Mammary epithelial cell (primary cell): ENCODE measurements at regions of chr14 and their contacts with region 1.

Region 1: GRCh38 chr14:81269100-81269978 is 48.6 kb upstream of the GTF2A1 start:
- DNase-seq: peak; percentile 64
- H3K4me3 ChIP-seq: no peak overlapping the region
- H3K27ac ChIP-seq: no peak overlapping the region
- H3K4me1 ChIP-seq: peaks cover 22% of the 10 kb centered on the region
- H3K27me3 ChIP-seq: no peaks in the 10 kb centered on the region
- CTCF ChIP-seq: peak; percentile 71 to 87

Region 2: GRCh38 chr14:80996049-80996901 is 273.1 kb before region 1 on chr14:
- CTCF ChIA-PET with region 1: no interaction called
- dilution Hi-C with region 1: no loop called
- in situ Hi-C with region 1: no loop called
- intact Hi-C with region 1: loop called (anchors 5 kb)
- DNase-seq: peak; percentile 81
- H3K4me3 ChIP-seq: no peak overlapping the region
- H3K27ac ChIP-seq: no peak overlapping the region
- H3K4me1 ChIP-seq: no peaks in the 10 kb centered on the region
- H3K27me3 ChIP-seq: peaks cover 5% of the 10 kb centered on the region
- CTCF ChIP-seq: peak; percentile 67 to 83

Region 3: GRCh38 chr14:81178063-81178462 is 91.3 kb before region 1 on chr14:
- CTCF ChIA-PET with region 1: no interaction called
- dilution Hi-C with region 1: no loop called
- in situ Hi-C with region 1: no loop called
- intact Hi-C with region 1: no loop called
- DNase-seq: no peak
- H3K4me3 ChIP-seq: no peak overlapping the region
- H3K27ac ChIP-seq: no peak overlapping the region
- H3K4me1 ChIP-seq: no peaks in the 10 kb centered on the region
- H3K27me3 ChIP-seq: no peaks in the 10 kb centered on the region
- CTCF ChIP-seq: no peak

Region 4: DNA sequence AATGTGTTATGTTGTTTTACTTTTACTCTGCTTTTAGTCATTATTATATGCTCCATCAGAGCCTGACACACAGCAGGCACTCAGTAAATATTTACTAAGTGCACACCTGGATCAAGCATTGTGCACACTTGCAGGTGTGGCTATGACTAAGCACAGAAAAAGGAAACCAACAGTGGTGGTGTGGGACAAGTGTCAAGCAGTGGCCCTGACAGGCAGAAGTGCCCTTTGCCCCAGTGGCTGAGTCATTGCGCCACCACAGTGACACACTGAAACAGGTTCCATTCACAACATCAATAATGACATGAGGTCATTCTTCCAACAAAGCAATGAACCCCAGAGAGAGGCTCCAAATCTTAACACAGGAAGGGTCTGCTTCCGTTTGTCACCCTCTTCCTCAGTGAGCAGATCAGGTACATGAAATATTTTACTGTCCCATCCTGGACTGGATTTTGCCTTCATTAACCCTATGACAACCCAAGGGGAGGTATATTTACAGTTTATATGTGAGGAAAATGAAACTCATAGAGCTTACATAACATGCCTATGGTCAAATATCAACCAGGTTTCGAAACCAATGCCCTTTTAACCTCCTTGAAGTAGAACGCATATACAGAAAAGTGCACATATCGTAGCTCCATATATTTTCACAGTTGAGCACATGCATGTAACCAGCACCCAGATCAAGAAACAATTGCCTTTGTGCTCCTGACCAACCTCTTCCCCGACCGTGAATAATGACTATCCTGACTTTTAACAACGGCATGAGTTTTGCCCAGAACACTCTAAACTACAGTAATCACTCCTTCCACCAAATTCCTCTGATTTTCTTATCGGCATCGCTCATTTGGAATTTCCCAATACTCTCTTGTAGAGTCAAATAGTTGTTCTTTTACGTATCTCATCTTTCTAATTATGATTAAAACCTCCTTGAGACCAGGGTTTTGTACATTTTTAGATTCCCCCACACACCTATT is 34.2 kb after region 1 on chr14:
- CTCF ChIA-PET with region 1: no interaction called
- dilution Hi-C with region 1: no loop called
- in situ Hi-C with region 1: no loop called
- intact Hi-C with region 1: no loop called
- DNase-seq: peak; percentile 77
- H3K4me3 ChIP-seq: no peak overlapping the region
- H3K27ac ChIP-seq: peak overlapping the region; percentile 17
- H3K4me1 ChIP-seq: peaks cover 28% of the 10 kb centered on the region
- H3K27me3 ChIP-seq: no peaks in the 10 kb centered on the region
- CTCF ChIP-seq: no peak

Region 5: DNA sequence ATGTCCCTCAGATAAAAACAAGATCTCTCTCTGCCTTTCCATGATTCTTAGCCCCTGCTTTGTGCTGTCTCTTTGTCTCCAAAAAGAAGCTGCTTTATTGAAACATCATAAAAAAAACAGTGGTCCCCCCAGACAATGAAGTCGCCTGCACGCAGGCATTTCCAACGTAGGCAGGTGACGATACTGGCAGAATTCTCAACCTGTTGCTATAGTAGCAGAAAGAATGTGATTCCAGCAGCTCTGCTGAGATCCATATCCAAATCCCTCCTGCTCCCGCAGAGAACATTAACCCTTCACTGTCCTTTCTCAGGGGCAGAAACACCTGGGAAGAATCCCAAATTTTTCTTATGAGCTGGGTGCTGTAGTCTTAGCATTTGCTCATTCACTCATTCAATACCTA is 46.0 kb after region 1 on chr14:
- CTCF ChIA-PET with region 1: no interaction called
- dilution Hi-C with region 1: no loop called
- in situ Hi-C with region 1: no loop called
- intact Hi-C with region 1: loop called (anchors 5 kb)
- DNase-seq: no peak
- H3K4me3 ChIP-seq: no peak overlapping the region
- H3K27ac ChIP-seq: peak overlapping the region; percentile 88
- H3K4me1 ChIP-seq: peaks cover 58% of the 10 kb centered on the region
- H3K27me3 ChIP-seq: no peaks in the 10 kb centered on the region
- CTCF ChIP-seq: no peak

Region 6: GRCh38 chr14:81390696-81391095 is 121.4 kb after region 1 on chr14:
- CTCF ChIA-PET with region 1: no interaction called
- dilution Hi-C with region 1: no loop called
- in situ Hi-C with region 1: no loop called
- intact Hi-C with region 1: loop called (anchors 2 kb)
- DNase-seq: no peak
- H3K4me3 ChIP-seq: no peak overlapping the region
- H3K27ac ChIP-seq: no peak overlapping the region
- H3K4me1 ChIP-seq: peaks cover 21% of the 10 kb centered on the region
- H3K27me3 ChIP-seq: no peaks in the 10 kb centered on the region
- CTCF ChIP-seq: no peak

Region 7: DNA sequence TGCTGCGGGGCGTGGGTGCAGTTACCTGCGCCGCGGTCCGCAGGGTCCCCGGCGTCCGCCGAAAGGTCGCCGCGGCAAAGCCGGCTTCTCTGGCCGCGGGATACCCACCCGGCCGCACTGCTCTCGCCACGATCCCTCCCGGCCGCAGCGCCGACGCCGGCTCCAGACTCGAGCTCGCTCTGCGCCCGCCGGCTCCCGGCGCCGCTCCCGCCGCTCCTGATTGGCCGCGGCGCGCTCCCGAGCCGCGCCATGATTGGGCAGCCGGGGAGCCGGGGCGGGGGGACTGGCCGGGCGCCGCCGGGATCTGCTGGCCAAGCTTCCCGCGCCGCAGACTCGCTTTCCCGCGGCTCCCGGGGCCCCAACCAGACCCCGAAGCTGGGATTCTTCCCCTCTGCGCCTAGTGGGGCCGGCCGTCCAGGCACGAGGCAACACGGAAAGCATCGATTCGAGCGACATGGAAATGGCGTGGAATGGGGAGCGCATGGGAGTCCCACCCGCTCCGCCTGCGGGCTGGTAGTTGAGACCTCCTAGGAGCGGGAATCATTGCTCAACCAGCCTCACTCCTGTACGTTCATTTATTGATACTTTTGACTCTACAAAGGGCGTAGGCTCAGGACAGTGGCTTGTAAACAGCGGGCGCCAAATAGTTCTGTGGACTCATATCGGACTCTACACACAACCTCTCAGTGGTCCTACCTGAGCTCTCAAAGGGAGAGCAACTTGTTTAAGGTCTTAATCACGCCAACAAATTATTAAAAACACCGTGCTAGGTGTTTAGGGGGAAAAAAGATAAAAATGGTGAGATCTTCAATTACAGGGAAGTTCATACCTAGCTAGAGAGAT is 167.2 kb after region 1 on chr14:
- CTCF ChIA-PET with region 1: no interaction called
- dilution Hi-C with region 1: no loop called
- in situ Hi-C with region 1: no loop called
- intact Hi-C with region 1: loop called (anchors 1 kb)
- DNase-seq: peak; percentile 84
- H3K4me3 ChIP-seq: peak overlapping the region; percentile 46 to 78 (median 69)
- H3K27ac ChIP-seq: peak overlapping the region; percentile 25
- H3K4me1 ChIP-seq: peaks cover 41% of the 10 kb centered on the region
- H3K27me3 ChIP-seq: no peaks in the 10 kb centered on the region
- CTCF ChIP-seq: no peak

Region 8: GRCh38 chr14:81464247-81465002 is 195.1 kb after region 1 on chr14:
- CTCF ChIA-PET with region 1: no interaction called
- dilution Hi-C with region 1: no loop called
- in situ Hi-C with region 1: no loop called
- intact Hi-C with region 1: loop called (anchors 1 kb)
- DNase-seq: peak; percentile 45
- H3K4me3 ChIP-seq: peak overlapping the region; percentile 45 to 51 (median 47)
- H3K27ac ChIP-seq: no peak overlapping the region
- H3K4me1 ChIP-seq: peaks cover 4% of the 10 kb centered on the region
- H3K27me3 ChIP-seq: no peaks in the 10 kb centered on the region
- CTCF ChIP-seq: peak; percentile 81 to 95